PC-9 (cell line): ENCODE measurements at regions of chr20 and their contacts with region 1.

Region 1: GRCh38 chr20:38044685-38045084 is 11.1 kb downstream of the RPRD1B start:
- DNase-seq: no peak
- H3K4me3 ChIP-seq: no peak overlapping the region
- H3K27ac ChIP-seq: no peak overlapping the region
- H3K4me1 ChIP-seq: peaks cover 3% of the 10 kb centered on the region; the same call in 1 of the 2 replicates
- H3K27me3 ChIP-seq: no peaks in the 10 kb centered on the region
- CTCF ChIP-seq: no peak

Region 2: DNA sequence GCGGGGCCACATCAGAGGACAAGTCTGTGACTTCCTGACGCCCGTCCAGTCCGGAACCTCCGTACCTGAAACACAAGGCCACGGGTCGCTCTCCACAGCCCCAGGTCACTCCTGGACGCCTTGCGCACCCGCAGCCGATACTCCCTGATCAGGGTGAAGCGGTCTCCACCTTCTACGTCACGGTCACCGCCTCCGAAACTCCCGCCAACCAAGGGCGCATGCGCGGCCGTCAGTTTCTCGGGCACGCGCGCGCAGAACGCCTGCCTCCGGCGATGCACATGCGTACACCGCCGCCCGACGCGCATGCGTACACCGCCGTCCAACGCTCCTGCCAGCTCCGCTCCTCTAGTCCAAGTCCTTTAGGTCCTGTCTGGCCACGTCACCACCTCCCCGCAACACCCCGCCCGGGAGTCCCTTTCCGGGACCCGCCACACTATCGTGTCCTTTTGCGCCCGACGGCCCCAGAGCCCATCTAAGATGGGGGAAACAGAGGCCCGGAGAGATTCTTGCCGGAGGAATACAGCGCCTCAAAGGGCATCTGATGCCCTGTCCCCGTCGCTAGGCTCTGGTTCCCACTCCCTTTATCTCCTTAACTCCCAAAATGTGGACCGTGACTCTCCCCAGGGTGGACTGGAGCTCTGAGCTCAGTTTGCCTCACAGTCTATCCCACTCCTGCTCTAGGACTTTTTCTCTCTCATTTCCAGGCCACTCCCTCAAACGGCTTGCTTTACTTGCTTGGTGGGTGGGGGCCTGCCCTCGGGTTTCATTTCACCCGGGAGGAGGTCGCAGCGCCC is 1270.9 kb before region 1 on chr20 and contains the start of gene DSN1:
- CTCF ChIA-PET with region 1: no interaction called
- POLR2A ChIA-PET with region 1: no interaction called
- intact Hi-C with region 1: no loop called
- DNase-seq: peak; percentile 91 to 99
- H3K4me3 ChIP-seq: peak within 1 kb of the TSS; percentile 70
- H3K27ac ChIP-seq: peak within 1 kb of the TSS; percentile 85
- H3K4me1 ChIP-seq: peaks cover 7% of the 10 kb centered on the region
- H3K27me3 ChIP-seq: no peaks in the 10 kb centered on the region
- CTCF ChIP-seq: peak; percentile 87
- total RNA-seq, gene DSN1: 29.2 and 32.4 TPM in 2 replicates

Region 3: DNA sequence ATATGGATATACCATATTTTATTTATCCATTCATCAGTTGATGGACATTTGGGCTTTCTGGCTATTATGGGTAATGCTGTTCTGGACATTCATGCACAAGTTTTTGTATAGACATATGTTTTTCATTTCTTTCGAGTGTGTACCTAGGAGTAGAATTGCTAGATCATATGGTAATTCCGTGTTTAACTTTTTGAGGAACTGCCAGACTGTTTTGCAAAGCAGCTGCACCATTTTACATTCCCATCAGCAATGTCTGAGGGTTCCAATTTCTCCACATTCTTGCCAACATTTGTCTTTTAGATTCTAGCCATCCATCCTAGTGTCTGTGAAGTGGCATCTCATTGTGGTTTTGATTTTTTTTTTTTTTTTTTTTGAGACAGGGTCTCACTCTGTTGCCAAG is 677.9 kb before region 1 on chr20:
- CTCF ChIA-PET with region 1: no interaction called
- POLR2A ChIA-PET with region 1: interaction called, 24 read pairs
- intact Hi-C with region 1: no loop called
- DNase-seq: no peak
- H3K4me3 ChIP-seq: no peak overlapping the region
- H3K27ac ChIP-seq: no peak overlapping the region
- H3K4me1 ChIP-seq: no peaks in the 10 kb centered on the region
- H3K27me3 ChIP-seq: no peaks in the 10 kb centered on the region
- CTCF ChIP-seq: no peak

Region 4: DNA sequence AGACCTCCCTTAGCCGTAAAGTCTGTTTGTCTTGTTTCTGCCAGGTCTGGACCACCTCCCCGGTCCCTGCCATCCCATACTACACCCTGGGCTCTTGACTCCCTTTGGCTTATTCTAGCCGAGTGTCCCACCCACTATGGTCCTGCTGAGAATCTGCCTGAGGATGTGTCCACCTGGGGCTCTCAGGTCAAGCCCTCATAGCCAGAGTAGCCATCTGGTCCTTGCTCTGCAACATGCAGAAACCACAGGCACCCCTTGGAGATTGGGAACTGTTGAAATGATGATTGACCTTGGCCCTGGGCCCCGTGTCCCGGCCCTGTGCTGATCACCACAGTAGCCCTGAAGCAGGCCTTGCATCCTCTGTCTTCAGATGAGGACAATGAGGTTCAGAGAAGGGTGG is 97.7 kb before region 1 on chr20:
- CTCF ChIA-PET with region 1: no interaction called
- POLR2A ChIA-PET with region 1: no interaction called
- intact Hi-C with region 1: no loop called
- DNase-seq: no peak
- H3K4me3 ChIP-seq: no peak overlapping the region
- H3K27ac ChIP-seq: no peak overlapping the region
- H3K4me1 ChIP-seq: no peaks in the 10 kb centered on the region
- H3K27me3 ChIP-seq: peaks cover 50% of the 10 kb centered on the region
- CTCF ChIP-seq: no peak